ENCODE measurements at regions of chr6 and their contacts with region 1.

Region 1: GRCh38 chr6:99568103-99568933 is at the start of gene CCNC:
- DNase-seq: peak; percentile 83 to 97
- H3K4me3 ChIP-seq: peak within 1 kb of the TSS; percentile 76 to 84
- H3K27ac ChIP-seq: peak within 1 kb of the TSS; percentile 58 to 78
- H3K4me1 ChIP-seq: peaks cover 0 to 12% of the 10 kb centered on the region in 2 donors
- H3K27me3 ChIP-seq: no peaks in the 10 kb centered on the region
- CTCF ChIP-seq: no peak
- total RNA-seq, gene CCNC: 29.9 TPM

Region 2: DNA sequence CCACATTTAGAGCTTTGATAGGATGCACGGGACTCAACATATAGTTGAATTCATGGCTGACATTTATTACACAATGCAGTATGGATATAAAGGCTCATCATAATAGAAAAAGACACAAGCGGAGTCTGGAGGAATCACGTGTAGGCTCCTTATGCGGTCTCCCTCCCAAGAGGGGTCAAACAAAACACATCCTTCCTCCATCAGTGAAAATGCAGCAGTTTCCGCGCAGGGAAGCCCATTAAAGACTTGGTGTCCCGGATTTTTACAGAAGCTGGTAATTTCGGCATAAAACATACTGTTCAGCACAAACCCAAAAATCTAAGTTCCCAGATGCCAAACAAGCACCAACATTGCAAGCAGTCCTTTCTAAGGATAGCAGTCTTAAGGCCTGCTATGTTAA is 54.2 kb before region 1 on chr6:
- intact Hi-C with region 1: loop called (anchors 1 kb)
- DNase-seq: no peak
- H3K4me3 ChIP-seq: peak overlapping the region; percentile 72 to 93
- H3K27ac ChIP-seq: no peak overlapping the region
- H3K4me1 ChIP-seq: peaks cover 0 to 8% of the 10 kb centered on the region in 2 donors
- H3K27me3 ChIP-seq: no peaks in the 10 kb centered on the region
- CTCF ChIP-seq: no peak

Region 3: GRCh38 chr6:99668036-99668705 is 99.9 kb after region 1 on chr6:
- intact Hi-C with region 1: no loop called
- DNase-seq: no peak
- H3K4me3 ChIP-seq: no peak overlapping the region
- H3K27ac ChIP-seq: no peak overlapping the region
- H3K4me1 ChIP-seq: no peaks in the 10 kb centered on the region
- H3K27me3 ChIP-seq: no peaks in the 10 kb centered on the region
- CTCF ChIP-seq: no peak

Region 4: DNA sequence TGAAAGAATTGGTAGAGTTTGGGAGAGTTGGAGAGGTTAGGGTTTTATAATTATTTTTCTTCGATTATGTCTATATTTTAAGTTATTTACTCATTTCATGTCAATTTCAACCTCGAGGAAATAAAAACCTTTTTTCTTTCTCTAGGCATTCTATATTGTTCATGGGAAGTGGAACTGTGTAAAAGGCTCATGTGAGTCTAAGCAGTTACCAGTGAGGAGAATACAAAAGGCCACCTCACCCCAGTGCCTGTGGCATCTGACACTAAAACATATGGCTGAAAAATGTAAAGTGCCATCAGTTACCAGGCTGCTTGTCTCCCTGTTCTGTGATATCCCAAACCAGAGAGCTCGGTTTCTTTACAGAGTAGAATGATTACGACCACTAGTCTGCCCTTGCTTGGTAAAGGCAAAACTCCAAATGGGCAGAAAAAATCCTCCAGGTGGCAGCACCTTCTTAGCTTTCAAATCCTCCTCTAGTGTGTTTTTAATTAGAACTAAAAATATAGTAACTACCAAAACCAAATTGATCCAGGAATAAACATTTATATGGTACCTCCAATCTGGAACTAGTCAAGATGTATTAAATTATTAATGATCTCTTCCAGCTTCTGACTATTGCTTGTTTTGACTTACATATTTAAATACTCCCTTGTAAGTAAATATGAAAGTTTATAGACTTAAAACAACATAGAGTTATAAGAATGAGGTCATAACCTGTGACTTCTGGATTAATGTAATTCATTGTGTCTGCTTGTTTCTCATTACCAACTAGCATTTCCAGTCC is 548.3 kb after region 1 on chr6:
- intact Hi-C with region 1: no loop called
- DNase-seq: no peak
- H3K4me3 ChIP-seq: no peak overlapping the region
- H3K27ac ChIP-seq: no peak overlapping the region
- H3K4me1 ChIP-seq: no peaks in the 10 kb centered on the region
- H3K27me3 ChIP-seq: no peaks in the 10 kb centered on the region
- CTCF ChIP-seq: peak; percentile 23 to 65 (median 48)

Measured in ascending aorta (tissue), 2 donors.